ENCODE measurements at regions of chr16 and their contacts with region 1.

Region 1: DNA sequence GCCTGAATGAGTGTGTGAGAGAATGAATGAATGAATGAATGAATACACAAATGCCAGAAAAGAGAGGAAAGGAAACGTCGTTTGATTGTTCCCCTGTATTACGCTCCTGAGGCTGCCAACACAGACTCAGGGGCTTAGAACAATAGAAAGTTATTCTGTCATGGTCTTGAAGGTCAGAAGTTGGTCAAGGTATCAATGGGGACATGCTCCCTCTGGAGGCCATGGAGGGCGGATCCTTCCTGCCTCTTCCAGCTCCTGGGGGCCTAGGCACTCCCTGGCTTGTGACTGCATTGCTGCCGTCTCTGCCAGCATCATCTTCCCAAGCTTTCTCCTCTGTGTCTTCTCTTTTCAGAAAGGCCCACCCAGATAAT is 1.5 kb upstream of the SLC38A8 start:
- DNase-seq: no peak
- H3K4me3 ChIP-seq: no peak overlapping the region
- H3K27ac ChIP-seq: no peak overlapping the region
- H3K4me1 ChIP-seq: no peaks in the 10 kb centered on the region
- H3K27me3 ChIP-seq: peaks cover 0 to 5% of the 10 kb centered on the region in 2 donors
- CTCF ChIP-seq: no peak
- POLR2A ChIP-seq: no peak

Region 2: GRCh38 chr16:83826146-83826913 is 217.8 kb before region 1 on chr16:
- intact Hi-C with region 1: loop called (anchors 10 kb)
- DNase-seq: peak; percentile 78 to 93
- H3K4me3 ChIP-seq: no peak overlapping the region
- H3K27ac ChIP-seq: no peak overlapping the region
- H3K4me1 ChIP-seq: no peaks in the 10 kb centered on the region
- H3K27me3 ChIP-seq: no peaks in the 10 kb centered on the region
- CTCF ChIP-seq: peak; percentile 85 to 89 (median 87)
- POLR2A ChIP-seq: no peak

Region 3: DNA sequence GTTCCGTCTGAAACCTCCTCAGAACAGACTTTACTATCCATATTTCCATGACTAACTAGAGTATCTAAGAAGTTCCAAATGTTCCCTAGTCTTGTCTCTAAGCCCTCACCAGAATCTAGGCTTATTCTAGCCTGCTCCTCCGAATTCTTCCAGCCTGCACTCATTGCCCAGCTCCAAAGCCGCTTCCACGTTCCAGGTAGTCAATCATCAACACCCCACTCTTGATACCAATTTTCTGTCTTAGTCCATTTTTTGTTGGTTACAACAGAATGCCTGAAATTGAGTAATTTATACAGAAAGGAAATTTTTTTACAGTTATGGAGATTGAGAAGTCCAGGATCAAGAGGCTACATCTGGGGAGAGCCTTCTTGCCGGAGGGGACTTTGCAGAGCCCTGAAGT is 22.6 kb before region 1 on chr16:
- intact Hi-C with region 1: loop called (anchors 1 kb)
- DNase-seq: no peak
- H3K4me3 ChIP-seq: no peak overlapping the region
- H3K27ac ChIP-seq: no peak overlapping the region
- H3K4me1 ChIP-seq: no peaks in the 10 kb centered on the region
- H3K27me3 ChIP-seq: peaks cover 0 to 3% of the 10 kb centered on the region in 2 donors
- CTCF ChIP-seq: no peak
- POLR2A ChIP-seq: no peak

Region 4: GRCh38 chr16:84294531-84295142 is 250.5 kb after region 1 on chr16 and contains the start of gene WFDC1:
- intact Hi-C with region 1: loop called (anchors 5 kb)
- DNase-seq: no peak
- H3K4me3 ChIP-seq: peak within 1 kb of the TSS in 2 of 3 donors; percentile 3 to 57
- H3K27ac ChIP-seq: no peak within 1 kb of the TSS
- H3K4me1 ChIP-seq: no peaks in the 10 kb centered on the region
- H3K27me3 ChIP-seq: peaks cover 0 to 25% of the 10 kb centered on the region in 2 donors
- CTCF ChIP-seq: no peak
- POLR2A ChIP-seq: no peak
- total RNA-seq, gene WFDC1: 0.16 to 3.3 (median 1.3) TPM

Region 5: DNA sequence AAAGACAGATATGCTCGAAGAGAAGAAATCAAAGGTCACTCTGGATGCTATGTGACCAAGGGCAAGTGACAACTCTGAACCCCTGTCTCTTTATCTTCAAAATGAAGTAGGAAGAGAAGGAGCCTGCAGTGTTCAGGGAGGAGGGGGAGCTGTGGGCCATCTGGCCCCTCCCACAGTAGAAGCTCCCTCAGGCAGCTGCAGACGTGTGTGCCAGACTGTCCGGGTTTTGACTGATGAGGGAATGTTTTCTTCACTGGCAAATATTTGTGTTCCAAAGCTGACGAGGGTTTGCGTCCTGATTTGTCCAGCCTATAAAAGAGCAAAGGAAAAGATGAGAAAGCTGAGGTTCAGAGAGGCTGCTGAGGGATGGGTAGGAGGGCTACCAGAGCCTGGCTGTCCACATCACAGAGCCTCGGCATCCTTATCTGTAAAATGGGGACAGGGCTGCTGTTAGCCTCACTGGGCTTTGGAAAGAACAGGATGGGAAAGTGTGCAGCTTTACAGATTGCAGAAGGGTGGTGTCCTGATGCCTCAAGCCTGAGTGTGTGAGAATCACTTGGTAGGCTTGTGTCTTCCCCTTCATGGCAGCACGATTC is 1646.5 kb after region 1 on chr16:
- intact Hi-C with region 1: loop called (anchors 5 kb)
- DNase-seq: peak in 1 of 2 donors; percentile 66
- H3K4me3 ChIP-seq: no peak overlapping the region
- H3K27ac ChIP-seq: no peak overlapping the region
- H3K4me1 ChIP-seq: peaks cover 0 to 4% of the 10 kb centered on the region in 2 donors
- H3K27me3 ChIP-seq: peaks cover 0 to 3% of the 10 kb centered on the region in 2 donors
- CTCF ChIP-seq: no peak
- POLR2A ChIP-seq: no peak

Measured in breast epithelium (tissue), 4 donors.